Mammary epithelial cell (primary cell): ENCODE measurements at regions of chr10 and their contacts with region 1.

Region 1: GRCh38 chr10:102245101-102245931 is at the start of gene GBF1:
- DNase-seq: peak; percentile 100
- H3K4me3 ChIP-seq: peak within 1 kb of the TSS; percentile 59 to 97 (median 70)
- H3K27ac ChIP-seq: peak within 1 kb of the TSS; percentile 71
- H3K4me1 ChIP-seq: peaks cover 46% of the 10 kb centered on the region
- H3K27me3 ChIP-seq: peaks cover 2% of the 10 kb centered on the region
- CTCF ChIP-seq: no peak
- total RNA-seq, gene GBF1: 37.8 to 49.4 TPM

Region 2: GRCh38 chr10:102280397-102281101 is 35.2 kb after region 1 on chr10:
- CTCF ChIA-PET with region 1: no interaction called
- dilution Hi-C with region 1: no loop called
- in situ Hi-C with region 1: loop called in 1 of 2 experiments (anchors 5 kb)
- intact Hi-C with region 1: no loop called
- DNase-seq: no peak
- H3K4me3 ChIP-seq: peak overlapping the region in 1 of 3 experiments; percentile 18
- H3K27ac ChIP-seq: peak overlapping the region; percentile 6
- H3K4me1 ChIP-seq: peaks cover 43% of the 10 kb centered on the region
- H3K27me3 ChIP-seq: no peaks in the 10 kb centered on the region
- CTCF ChIP-seq: no peak

Region 3: GRCh38 chr10:102299873-102300272 is 54.6 kb after region 1 on chr10:
- CTCF ChIA-PET with region 1: no interaction called
- dilution Hi-C with region 1: no loop called
- in situ Hi-C with region 1: no loop called
- intact Hi-C with region 1: loop called (anchors 5 kb)
- DNase-seq: peak; percentile 66
- H3K4me3 ChIP-seq: no peak overlapping the region
- H3K27ac ChIP-seq: no peak overlapping the region
- H3K4me1 ChIP-seq: peaks cover 8% of the 10 kb centered on the region
- H3K27me3 ChIP-seq: no peaks in the 10 kb centered on the region
- CTCF ChIP-seq: no peak

Region 4: DNA sequence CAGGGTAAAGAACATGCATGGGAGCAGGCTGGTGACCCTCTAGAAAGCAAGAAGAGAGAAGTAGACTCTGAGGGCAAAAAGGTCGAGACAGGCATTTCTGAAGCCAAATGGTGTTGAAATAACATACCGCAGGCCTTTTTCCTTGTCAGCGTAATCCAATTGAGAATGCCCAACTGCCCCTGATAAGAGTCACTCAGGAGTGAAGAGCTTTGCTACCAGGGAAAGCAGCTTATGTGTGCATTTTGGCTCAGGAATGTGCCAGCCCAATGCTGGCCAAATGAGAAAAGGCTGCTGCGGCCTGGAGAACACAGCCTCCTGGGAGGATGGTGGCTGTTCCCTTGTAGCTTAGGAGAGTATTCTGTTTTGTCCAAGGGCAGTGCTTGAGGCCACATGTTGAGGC is 88.8 kb after region 1 on chr10:
- CTCF ChIA-PET with region 1: no interaction called
- dilution Hi-C with region 1: no loop called
- in situ Hi-C with region 1: no loop called
- intact Hi-C with region 1: no loop called
- DNase-seq: no peak
- H3K4me3 ChIP-seq: no peak overlapping the region
- H3K27ac ChIP-seq: no peak overlapping the region
- H3K4me1 ChIP-seq: no peaks in the 10 kb centered on the region
- H3K27me3 ChIP-seq: no peaks in the 10 kb centered on the region
- CTCF ChIP-seq: no peak

Region 5: DNA sequence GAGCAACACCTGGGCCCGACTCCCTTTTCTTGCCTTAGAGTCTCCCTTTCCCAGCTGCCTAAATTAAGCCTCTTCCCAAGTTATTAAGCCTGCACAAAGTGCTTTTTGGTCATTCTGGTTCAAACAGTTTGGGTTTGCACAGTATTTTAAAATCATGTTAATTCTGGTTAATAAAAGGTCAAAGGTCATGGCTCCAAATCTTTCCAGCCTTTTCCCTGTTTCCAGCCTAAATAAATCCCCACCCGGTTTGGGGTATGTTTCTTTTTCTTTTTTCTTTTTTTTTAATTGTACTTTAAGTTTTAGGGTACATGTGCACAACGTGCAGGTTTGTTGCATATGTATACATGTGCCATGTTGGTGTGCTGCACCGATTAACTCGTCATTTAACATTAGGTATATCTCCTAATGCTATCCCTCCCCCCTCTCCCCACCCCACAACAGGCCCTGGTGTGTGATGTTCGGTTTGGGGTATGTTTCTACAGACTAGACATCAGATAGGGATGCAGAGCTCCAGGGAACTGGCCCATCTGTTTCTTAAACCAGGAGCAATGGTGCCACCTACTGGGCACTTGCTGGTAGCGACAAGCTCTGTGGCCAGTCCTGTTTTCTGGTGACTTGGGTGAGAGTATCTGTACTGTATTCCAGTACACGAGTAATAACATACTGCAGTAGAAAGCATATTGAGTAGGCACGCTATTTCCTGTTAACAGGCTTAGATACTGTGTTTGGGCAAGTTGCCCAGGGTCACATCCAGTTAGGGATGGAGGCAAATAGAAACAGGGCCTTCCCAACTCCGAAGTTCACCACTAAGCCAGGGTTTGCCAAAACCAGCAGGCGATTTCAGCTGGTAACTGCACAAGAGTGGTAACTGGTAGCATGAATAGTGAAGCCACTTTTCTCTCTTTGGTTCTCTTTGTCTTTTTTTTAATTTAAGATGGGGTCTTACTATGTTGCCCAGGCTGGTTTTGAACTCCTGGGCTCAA is 338.4 kb after region 1 on chr10:
- CTCF ChIA-PET with region 1: no interaction called
- dilution Hi-C with region 1: no loop called
- in situ Hi-C with region 1: loop called in 1 of 2 experiments (anchors 25 kb)
- intact Hi-C with region 1: no loop called
- DNase-seq: peak; percentile 66
- H3K4me3 ChIP-seq: no peak overlapping the region
- H3K27ac ChIP-seq: no peak overlapping the region
- H3K4me1 ChIP-seq: no peaks in the 10 kb centered on the region
- H3K27me3 ChIP-seq: no peaks in the 10 kb centered on the region
- CTCF ChIP-seq: peak; percentile 89 to 91